Activated CD8-positive, alpha-beta T cell treated with anti-CD3 and anti-CD28 coated beads, Interleukin-2, amount 10 ng/mL, durations not matched to agents 7 days and 5 days (primary cell): ENCODE measurements at regions of chr2 and their contacts with region 1.

Region 1: DNA sequence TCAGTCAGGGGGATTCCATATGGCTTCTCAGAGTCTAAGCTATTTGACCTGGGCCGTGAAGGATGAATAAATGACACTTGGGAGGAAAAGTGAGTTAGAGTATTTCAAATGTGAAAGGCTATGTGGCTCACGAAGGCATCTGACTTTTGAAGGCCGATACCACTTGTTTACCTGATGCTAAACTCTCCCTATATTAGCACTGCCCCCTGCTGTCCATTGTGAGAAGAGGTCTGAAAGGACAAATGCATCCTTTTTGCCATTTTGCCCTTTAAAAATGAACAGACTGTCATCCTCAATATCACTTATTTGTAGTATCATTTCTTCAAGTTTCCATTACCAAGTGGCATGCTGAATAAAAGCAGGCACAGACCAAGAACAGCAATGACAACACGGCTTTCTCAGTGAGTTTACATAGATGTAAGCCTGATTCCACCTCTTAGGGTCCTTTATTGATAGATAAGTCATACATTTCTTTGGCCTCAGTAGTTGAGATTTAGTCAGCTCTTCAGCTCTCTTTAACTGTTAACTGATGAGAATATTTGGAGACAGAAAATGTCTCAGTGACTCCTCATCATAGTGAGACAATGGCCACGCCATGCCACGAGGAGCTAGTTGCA is 40.1 kb downstream of the DOCK10 start:
- DNase-seq: peak; percentile 85
- ATAC-seq: peak; percentile 80
- H3K4me3 Mint-ChIP-seq: no peak overlapping the region
- H3K27ac Mint-ChIP-seq: peak overlapping the region; percentile 78
- H3K4me1 Mint-ChIP-seq: peaks cover 80% of the 10 kb centered on the region
- H3K27me3 Mint-ChIP-seq: no peaks in the 10 kb centered on the region

Region 2: GRCh38 chr2:224927646-224928173 is 74.4 kb before region 1 on chr2:
- CTCF ChIA-PET with region 1: interaction called, 89 read pairs
- POLR2A ChIA-PET with region 1: interaction called, 3 read pairs
- DNase-seq: peak; percentile 91
- ATAC-seq: peak; percentile 75
- H3K4me3 Mint-ChIP-seq: peak overlapping the region; percentile 64
- H3K27ac Mint-ChIP-seq: peak overlapping the region; percentile 100
- H3K4me1 Mint-ChIP-seq: peaks cover 99% of the 10 kb centered on the region
- H3K27me3 Mint-ChIP-seq: no peaks in the 10 kb centered on the region

Region 3: DNA sequence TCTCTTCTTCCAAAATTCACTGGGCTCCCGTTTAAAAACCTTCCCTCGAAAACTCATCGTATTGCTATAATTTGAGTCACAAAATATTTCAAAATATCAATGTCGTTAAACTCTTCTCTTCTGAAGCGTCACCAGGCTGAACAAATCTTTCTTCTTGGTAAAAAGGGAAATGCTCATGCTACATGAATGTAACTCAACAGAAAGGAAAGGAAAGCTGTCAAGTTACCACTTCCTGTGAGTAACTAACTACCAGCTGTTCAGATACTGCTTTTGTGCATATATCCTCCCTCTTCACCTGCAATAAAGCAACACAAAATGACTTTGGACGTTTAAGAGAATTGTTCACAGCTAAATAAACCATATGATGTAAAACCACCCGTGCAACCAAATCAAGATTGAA is 55.3 kb before region 1 on chr2:
- CTCF ChIA-PET with region 1: interaction called, 25 read pairs
- POLR2A ChIA-PET with region 1: interaction called, 3 read pairs
- DNase-seq: no peak
- ATAC-seq: peak; percentile 50
- H3K4me3 Mint-ChIP-seq: peak overlapping the region; percentile 95
- H3K27ac Mint-ChIP-seq: peak overlapping the region; percentile 93
- H3K4me1 Mint-ChIP-seq: peaks cover 60% of the 10 kb centered on the region
- H3K27me3 Mint-ChIP-seq: no peaks in the 10 kb centered on the region

Region 4: DNA sequence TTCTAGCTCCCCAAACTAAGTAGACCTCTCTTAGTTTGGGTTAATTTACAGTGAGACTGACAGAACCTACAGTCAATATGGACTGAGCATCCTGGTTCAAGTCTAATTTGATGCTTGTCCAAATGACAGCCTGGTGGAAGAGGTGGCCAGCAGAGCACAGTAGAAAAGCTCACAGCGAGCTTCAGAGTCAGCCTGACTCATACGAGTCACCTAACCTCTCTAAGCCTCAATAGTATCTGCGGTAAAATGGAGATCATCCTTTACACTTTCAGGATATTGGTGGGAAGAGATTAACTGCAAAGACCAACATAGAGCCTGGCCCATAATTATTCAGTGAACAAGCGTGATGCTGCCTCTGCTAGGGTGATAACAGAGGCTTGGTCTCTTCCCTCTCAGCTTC is 14.4 kb before region 1 on chr2:
- CTCF ChIA-PET with region 1: interaction called, 27 read pairs
- POLR2A ChIA-PET with region 1: interaction called, 3 read pairs
- DNase-seq: no peak
- ATAC-seq: no peak
- H3K4me3 Mint-ChIP-seq: no peak overlapping the region
- H3K27ac Mint-ChIP-seq: peak overlapping the region; percentile 80
- H3K4me1 Mint-ChIP-seq: peaks cover 89% of the 10 kb centered on the region
- H3K27me3 Mint-ChIP-seq: no peaks in the 10 kb centered on the region

Region 5: GRCh38 chr2:225041851-225042799 is 40.0 kb after region 1 on chr2 and contains the start of gene DOCK10:
- CTCF ChIA-PET with region 1: interaction called, 31 read pairs
- POLR2A ChIA-PET with region 1: interaction called, 5 read pairs
- DNase-seq: peak; percentile 60
- ATAC-seq: peak; percentile 48
- H3K4me3 Mint-ChIP-seq: peak within 1 kb of the TSS; percentile 98
- H3K27ac Mint-ChIP-seq: peak within 1 kb of the TSS; percentile 98
- H3K4me1 Mint-ChIP-seq: peaks cover 50% of the 10 kb centered on the region
- H3K27me3 Mint-ChIP-seq: peaks cover 15% of the 10 kb centered on the region
- total RNA-seq, gene DOCK10: 343 to 344 TPM

Region 6: GRCh38 chr2:225233233-225233632 is 231.1 kb after region 1 on chr2:
- CTCF ChIA-PET with region 1: no interaction called
- POLR2A ChIA-PET with region 1: no interaction called
- DNase-seq: no peak
- ATAC-seq: no peak
- H3K4me3 Mint-ChIP-seq: no peak overlapping the region
- H3K27ac Mint-ChIP-seq: no peak overlapping the region
- H3K4me1 Mint-ChIP-seq: no peaks in the 10 kb centered on the region
- H3K27me3 Mint-ChIP-seq: no peaks in the 10 kb centered on the region